IMR-90 (cell line): ENCODE measurements at regions of chr10 and their contacts with region 1.

Region 1: GRCh38 chr10:87094373-87095235 is at the starts of genes GLUD1 and SHLD2:
- DNase-seq: peak; percentile 84
- ATAC-seq: peak; percentile 85
- H3K4me3 ChIP-seq: peak within 1 kb of the TSS; percentile 84
- H3K27ac ChIP-seq: peak within 1 kb of the TSS; percentile 95
- H3K4me1 ChIP-seq: peaks cover 6% of the 10 kb centered on the region
- H3K27me3 ChIP-seq: no peaks in the 10 kb centered on the region
- CTCF ChIP-seq: peak; percentile 17; the same call in 1 of the 2 replicates
- POLR2A ChIP-seq: peak; percentile 87
- RAD21 ChIP-seq: no peak
- total RNA-seq, gene GLUD1: 210 and 222 TPM in 2 replicates
- total RNA-seq, gene SHLD2: 19.9 and 28.1 TPM in 2 replicates

Region 2: GRCh38 chr10:85430991-85431390 is 1663.6 kb before region 1 on chr10:
- CTCF ChIA-PET with region 1: no interaction called
- POLR2A ChIA-PET with region 1: no interaction called
- dilution Hi-C with region 1: no loop called
- in situ Hi-C with region 1: no loop called
- intact Hi-C with region 1: no loop called
- DNase-seq: no peak
- ATAC-seq: no peak
- H3K4me3 ChIP-seq: no peak overlapping the region
- H3K27ac ChIP-seq: no peak overlapping the region
- H3K4me1 ChIP-seq: no peaks in the 10 kb centered on the region
- H3K27me3 ChIP-seq: no peaks in the 10 kb centered on the region
- CTCF ChIP-seq: no peak
- POLR2A ChIP-seq: no peak
- RAD21 ChIP-seq: no peak

Region 3: DNA sequence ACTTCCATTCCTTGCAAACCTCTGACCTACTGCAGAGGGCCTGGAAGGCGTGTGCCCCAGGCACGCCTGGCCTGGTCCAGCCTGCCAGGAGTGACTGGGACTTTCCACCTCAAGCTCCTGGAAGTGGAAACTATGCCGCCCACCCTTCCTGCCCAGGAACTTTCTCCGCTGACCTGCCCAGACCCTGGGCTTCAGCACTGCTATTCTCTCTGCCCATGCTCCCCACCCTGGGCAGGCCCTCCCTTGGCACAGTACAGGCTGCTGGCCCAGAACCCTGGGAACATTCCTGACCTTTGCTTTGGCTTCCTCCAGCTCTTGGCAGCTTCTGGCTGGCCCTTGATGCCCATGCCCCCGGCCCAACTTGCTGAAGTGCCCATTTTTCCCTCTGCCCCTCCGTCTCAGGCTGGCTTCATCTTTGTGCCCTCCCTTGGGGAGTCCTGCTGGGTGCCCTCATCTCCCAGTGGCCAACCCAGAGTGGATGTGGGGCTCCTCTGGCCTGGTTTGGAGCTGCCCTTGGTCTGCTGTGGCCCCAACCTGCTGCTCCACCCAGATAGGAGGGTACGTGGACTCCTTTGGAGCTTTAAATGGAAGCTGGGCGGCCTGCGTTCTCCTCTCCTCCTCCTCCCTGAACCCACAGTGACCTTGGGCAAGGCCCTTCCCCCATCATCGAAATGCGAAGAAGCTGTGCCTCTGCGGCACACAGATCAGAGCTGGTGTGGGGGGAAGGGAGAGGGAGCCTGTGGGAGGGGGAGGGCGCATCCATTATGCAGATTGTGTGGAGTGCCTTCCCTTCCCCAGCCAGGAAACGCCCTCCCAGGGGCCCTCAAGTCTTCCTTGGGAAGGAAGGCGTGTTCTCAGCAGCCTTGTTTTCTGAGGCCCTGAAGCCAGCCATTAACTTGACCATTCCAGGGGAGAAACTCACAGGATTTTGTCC is 140.6 kb before region 1 on chr10:
- CTCF ChIA-PET with region 1: no interaction called
- POLR2A ChIA-PET with region 1: no interaction called
- dilution Hi-C with region 1: no loop called
- in situ Hi-C with region 1: no loop called
- intact Hi-C with region 1: no loop called
- DNase-seq: peak; percentile 35
- ATAC-seq: peak; percentile 54
- H3K4me3 ChIP-seq: no peak overlapping the region
- H3K27ac ChIP-seq: no peak overlapping the region
- H3K4me1 ChIP-seq: peaks cover 13% of the 10 kb centered on the region
- H3K27me3 ChIP-seq: no peaks in the 10 kb centered on the region
- CTCF ChIP-seq: no peak
- POLR2A ChIP-seq: no peak
- RAD21 ChIP-seq: no peak

Region 4: DNA sequence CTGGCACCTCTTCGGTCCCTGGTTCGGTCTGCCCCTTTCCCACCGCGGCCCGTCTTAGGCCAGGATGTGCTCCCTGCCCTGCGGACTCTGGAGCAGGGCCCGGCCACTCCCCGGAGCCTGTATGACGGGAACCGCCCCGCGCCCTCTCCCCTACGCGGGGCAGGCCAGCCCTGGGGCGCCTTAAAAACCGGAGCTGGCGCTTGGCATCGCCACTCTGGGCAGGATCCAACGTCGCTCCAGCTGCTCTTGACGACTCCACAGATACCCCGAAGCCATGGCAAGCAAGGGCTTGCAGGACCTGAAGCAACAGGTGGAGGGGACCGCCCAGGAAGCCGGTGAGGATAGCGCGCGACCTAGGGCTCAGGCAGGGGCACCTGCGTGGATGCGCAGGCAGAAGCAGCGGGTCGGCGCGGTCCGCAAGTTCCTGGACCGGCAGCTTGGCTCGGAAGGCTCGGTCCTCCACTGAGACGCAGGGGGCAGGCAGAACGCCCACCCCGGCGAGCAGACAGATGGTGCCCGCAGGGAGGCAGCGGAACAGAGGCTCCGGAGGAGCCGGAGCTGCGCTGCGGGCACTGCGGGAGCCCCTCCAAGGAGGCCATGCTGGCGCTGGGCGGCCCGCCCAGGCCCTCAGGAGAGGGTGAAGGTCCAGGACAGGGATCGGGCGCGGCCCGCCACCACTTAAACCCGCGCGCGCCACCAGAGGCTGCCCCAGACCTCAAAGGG is 126.2 kb before region 1 on chr10 and contains the start of gene ADIRF:
- CTCF ChIA-PET with region 1: no interaction called
- POLR2A ChIA-PET with region 1: no interaction called
- dilution Hi-C with region 1: no loop called
- in situ Hi-C with region 1: no loop called
- intact Hi-C with region 1: loop called (anchors 2 kb)
- DNase-seq: no peak
- ATAC-seq: no peak
- H3K4me3 ChIP-seq: no peak within 1 kb of the TSS
- H3K27ac ChIP-seq: no peak within 1 kb of the TSS; the same call in 1 of the 2 replicates
- H3K4me1 ChIP-seq: peaks cover 36% of the 10 kb centered on the region
- H3K27me3 ChIP-seq: no peaks in the 10 kb centered on the region
- CTCF ChIP-seq: no peak
- POLR2A ChIP-seq: no peak
- RAD21 ChIP-seq: no peak
- total RNA-seq, gene ADIRF: 2.3 and 2.5 TPM in 2 replicates

Region 5: GRCh38 chr10:87079106-87079836 is 15.3 kb before region 1 on chr10:
- CTCF ChIA-PET with region 1: interaction called, 4 read pairs
- POLR2A ChIA-PET with region 1: no interaction called
- dilution Hi-C with region 1: no loop called
- in situ Hi-C with region 1: no loop called
- intact Hi-C with region 1: loop called (anchors 1 kb)
- DNase-seq: no peak
- ATAC-seq: no peak
- H3K4me3 ChIP-seq: no peak overlapping the region
- H3K27ac ChIP-seq: no peak overlapping the region
- H3K4me1 ChIP-seq: peaks cover 4% of the 10 kb centered on the region
- H3K27me3 ChIP-seq: no peaks in the 10 kb centered on the region
- CTCF ChIP-seq: no peak
- POLR2A ChIP-seq: no peak
- RAD21 ChIP-seq: no peak